BJ (cell line): ENCODE measurements at regions of chr1 and their contacts with region 1.

Region 1: DNA sequence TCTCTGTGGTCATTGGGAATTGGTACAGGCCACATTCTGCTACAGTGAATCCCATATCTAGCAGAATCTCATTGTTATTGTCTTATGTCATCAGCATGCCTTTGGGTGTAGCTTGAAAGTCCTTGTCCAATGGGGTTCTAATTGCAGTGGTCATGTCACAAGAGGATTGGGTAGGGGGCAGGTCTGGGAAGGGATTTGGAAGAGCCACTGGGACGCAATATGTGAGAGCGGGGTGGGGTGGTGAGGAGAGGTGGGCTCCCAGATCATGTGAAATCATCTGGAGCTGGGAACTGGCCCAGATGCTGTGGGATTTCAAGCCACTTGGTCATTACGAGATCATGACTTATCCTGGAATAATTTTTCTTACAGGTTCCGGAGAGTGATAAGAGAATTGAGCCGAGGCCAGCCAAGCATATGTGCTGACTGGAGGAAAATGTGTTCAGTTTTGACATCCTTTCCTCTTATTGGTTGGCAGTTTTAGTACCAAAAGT is 16.3 kb downstream of the CNIH3 start:
- DNase-seq: no peak
- H3K4me3 ChIP-seq: no peak overlapping the region
- H3K27me3 ChIP-seq: no peaks in the 10 kb centered on the region
- CTCF ChIP-seq: no peak

Region 2: GRCh38 chr1:224127925-224128819 is 504.3 kb before region 1 on chr1:
- CTCF ChIA-PET with region 1: no interaction called
- POLR2A ChIA-PET with region 1: interaction called, 13 read pairs
- DNase-seq: peak; percentile 26
- H3K4me3 ChIP-seq: no peak overlapping the region
- H3K27me3 ChIP-seq: no peaks in the 10 kb centered on the region
- CTCF ChIP-seq: no peak

Region 3: DNA sequence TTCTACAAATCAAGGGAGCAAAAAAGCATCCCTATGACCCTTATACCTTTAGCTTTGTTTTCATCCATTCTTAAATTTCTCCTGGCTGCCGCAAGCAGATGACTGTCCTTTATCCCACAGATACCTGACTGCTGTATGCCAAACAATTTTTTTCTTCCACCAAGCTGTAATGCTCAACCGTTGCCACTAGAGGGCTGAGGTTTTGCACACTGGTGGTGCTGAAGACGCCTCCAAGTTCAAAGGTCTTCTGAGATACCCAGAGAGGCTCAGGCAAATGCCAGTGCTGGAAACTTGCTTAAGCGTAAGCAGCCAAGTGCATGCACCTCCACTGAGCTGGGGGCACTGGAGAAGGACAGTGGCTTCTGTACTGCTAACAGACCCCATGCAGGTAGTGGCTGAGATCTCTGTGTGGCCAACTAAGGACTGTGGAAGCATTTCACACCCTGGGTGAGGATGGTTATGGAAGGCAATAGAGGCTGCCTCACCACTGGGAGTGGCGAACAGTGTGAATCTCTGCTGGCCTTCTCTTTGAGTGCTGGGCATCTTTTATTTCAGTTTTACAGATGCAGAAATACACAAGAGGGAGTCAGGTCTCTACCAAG is 12.2 kb after region 1 on chr1:
- CTCF ChIA-PET with region 1: interaction called, 37 read pairs
- POLR2A ChIA-PET with region 1: no interaction called
- DNase-seq: no peak
- H3K4me3 ChIP-seq: no peak overlapping the region
- H3K27me3 ChIP-seq: no peaks in the 10 kb centered on the region
- CTCF ChIP-seq: peak; percentile 94